ENCODE measurements at regions of chr9 and their contacts with region 1.

Region 1: DNA sequence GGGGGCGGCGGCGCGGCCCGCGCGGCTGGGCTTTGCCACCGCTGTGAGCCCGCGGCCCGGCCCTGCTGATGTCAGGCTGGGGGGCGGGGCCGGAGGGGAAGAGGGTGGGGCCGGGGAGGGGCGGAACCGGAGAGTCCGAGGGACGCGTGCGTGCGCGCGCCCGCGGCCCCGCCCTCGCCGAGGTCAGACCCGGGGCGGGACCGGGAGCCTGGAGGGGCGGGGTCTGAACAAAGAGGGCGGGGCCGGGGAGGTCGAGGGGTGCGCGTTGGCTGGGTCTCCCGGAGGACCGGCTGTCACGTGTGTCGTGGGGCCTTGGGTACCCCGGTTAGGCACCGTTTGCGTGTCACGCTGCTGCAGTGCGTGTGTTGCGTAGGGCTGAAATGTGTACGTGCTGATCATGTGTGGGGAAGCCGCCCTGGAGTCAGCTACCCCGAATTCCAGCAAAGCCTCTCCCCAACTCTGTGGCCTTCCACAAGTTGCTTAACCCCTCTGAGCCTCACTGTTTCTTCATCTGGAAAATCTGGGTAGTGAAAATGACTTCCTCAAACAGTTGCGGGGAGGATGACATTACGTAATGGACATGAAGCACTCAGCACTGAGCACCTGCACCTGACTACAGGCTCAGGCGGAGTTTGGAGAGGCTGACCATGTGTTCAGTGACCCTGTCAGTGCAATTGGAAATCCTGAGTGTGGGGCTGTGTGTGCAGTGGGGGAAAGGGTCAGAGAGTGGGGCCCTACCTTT is at the start of gene RALGDS:
- DNase-seq: peak; percentile 95
- ATAC-seq: peak; percentile 86
- total RNA-seq, gene RALGDS: 33.7 TPM

Region 2: GRCh38 chr9:132507746-132508469 is 613.5 kb before region 1 on chr9:
- intact Hi-C with region 1: no loop called
- DNase-seq: no peak
- ATAC-seq: peak; percentile 61

Region 3: GRCh38 chr9:133075925-133076630 is 45.3 kb before region 1 on chr9:
- intact Hi-C with region 1: no loop called
- DNase-seq: no peak
- ATAC-seq: no peak

Region 4: DNA sequence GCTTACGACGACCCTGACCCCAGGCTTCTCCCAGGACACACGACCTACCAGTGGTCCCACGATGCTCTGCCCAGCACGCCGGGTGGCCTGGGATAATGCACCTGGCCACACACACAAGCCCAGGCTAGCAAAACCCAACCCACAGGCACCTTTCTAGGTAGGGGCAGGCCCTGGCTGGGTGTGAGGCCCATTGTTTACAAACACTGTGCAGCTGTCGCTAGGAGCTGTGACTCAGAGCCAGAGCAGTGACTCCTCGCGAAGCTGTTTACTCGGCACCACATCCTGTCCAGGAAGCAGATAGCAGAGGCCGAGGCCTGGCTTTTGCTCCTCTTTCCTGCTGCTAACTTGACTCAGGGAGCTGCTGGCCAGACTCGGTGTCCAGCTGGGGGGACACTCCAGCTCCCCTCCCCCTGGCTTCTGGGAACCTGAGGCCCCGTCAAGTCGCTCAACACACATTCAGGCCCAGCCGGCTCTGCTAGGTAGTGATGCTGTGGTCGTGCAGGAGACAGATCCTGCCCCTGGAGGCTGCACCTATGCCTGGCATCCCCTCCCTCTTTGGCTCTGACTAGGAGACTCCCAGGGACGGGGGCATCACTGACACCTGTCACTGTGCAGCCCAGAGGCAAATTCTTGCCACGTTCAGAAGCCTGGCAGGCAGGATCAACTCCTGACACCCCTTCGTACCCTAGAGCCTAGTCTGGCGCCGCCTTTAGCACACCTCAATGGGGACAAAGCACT is 12.5 kb after region 1 on chr9:
- intact Hi-C with region 1: loop called (anchors 2 kb)
- DNase-seq: peak; percentile 93
- ATAC-seq: peak; percentile 90